ENCODE measurements at regions of chr22 and their contacts with region 1.

Region 1: GRCh38 chr22:31084811-31085497 is 3.8 kb downstream of the SMTN start:
- DNase-seq: peak; percentile 87 to 90 (median 89)
- ATAC-seq: peak; percentile 69 to 82 (median 76)
- H3K4me3 ChIP-seq: peak overlapping the region; percentile 78 to 89 (median 85)
- H3K27ac ChIP-seq: peak overlapping the region; percentile 83 to 93 (median 85)
- H3K4me1 ChIP-seq: peaks cover 0 to 6% (median 0%) of the 10 kb centered on the region in 4 donors
- H3K27me3 ChIP-seq: no peaks in the 10 kb centered on the region
- CTCF ChIP-seq: peak; percentile 79 to 94 (median 92)
- POLR2A ChIP-seq: peak; percentile 81

Region 2: DNA sequence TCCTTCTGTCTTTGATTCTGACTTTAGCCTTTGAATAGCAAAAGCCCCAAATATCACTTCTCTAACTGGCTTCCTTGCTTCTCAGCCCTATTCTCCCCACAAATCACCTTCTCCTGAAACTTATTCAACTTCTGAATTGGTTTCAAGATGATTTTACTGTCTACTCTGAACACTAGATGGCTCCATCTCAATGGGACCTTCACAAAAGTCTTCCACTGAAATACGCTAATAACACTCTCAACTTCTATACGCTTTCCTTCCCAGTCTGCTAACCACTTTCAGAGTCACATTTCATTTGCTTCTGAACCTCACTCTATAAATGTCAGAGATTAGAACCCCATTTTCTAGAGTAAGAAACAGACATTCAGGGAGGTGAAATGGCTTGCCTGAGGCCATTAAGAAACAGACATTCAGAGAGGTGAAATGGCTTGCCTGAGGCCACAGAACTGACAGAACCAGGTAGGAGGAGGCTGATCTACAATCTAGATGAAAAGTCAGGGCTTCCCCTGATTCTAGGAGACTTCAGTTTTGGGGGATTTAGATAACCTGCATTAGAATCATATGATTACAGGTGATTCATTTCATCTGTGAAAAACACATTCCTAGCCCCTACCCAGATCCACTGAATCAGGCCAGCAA is 137.0 kb before region 1 on chr22:
- intact Hi-C with region 1: loop called (anchors 5 kb)
- DNase-seq: no peak
- ATAC-seq: peak; percentile 65 to 82 (median 70)
- H3K4me3 ChIP-seq: no peak overlapping the region
- H3K27ac ChIP-seq: no peak overlapping the region
- H3K4me1 ChIP-seq: no peaks in the 10 kb centered on the region
- H3K27me3 ChIP-seq: no peaks in the 10 kb centered on the region
- CTCF ChIP-seq: peak; percentile 50 to 61 (median 54)
- POLR2A ChIP-seq: no peak

Region 3: DNA sequence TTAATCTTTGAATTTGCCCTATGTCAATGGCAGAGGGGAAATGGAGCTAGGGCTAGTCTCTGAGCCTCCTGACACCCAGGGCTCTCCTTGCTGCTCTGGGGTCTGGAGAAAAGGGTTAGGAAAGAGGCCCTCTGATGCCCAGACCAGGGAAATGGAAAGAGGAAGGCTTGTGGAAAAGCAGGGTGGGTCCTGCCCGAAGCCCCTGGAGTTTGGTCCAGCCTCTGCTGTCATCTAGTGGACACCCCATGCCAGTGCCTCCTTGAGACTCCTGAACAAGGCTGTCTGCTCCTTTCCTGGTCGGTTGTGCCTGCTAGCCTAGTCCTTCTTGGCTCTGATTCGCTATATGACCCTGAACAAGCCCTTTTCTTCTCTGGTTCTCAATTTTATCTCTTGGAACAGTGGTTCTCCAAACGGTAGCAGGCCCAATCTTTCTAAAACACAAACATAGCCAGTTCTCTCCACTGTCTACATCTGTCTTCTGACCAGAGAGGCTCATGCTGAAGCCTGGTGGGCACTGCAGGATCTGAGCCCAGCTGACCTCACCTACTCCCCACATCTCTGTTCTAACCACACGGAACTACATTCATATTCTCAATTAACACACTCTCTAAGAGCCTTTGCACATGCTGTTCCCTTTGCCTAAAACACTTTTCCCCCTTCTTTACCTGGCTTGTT is 64.1 kb after region 1 on chr22:
- intact Hi-C with region 1: loop called in 1 of 2 experiments (anchors 10 kb)
- DNase-seq: peak in 1 of 3 donors; percentile 55
- ATAC-seq: peak; percentile 85 to 89 (median 88)
- H3K4me3 ChIP-seq: no peak overlapping the region
- H3K27ac ChIP-seq: no peak overlapping the region
- H3K4me1 ChIP-seq: no peaks in the 10 kb centered on the region
- H3K27me3 ChIP-seq: no peaks in the 10 kb centered on the region
- CTCF ChIP-seq: peak; percentile 63 to 82 (median 76)
- POLR2A ChIP-seq: no peak

Region 4: GRCh38 chr22:31230871-31231621 is 146.1 kb after region 1 on chr22:
- intact Hi-C with region 1: loop called in 1 of 2 experiments (anchors 10 kb)
- DNase-seq: peak in 2 of 3 donors; percentile 38 to 67
- ATAC-seq: peak; percentile 69 to 91 (median 83)
- H3K4me3 ChIP-seq: no peak overlapping the region
- H3K27ac ChIP-seq: peak overlapping the region; percentile 71 to 85 (median 78)
- H3K4me1 ChIP-seq: peaks cover 0 to 41% (median 19%) of the 10 kb centered on the region in 4 donors
- H3K27me3 ChIP-seq: no peaks in the 10 kb centered on the region
- CTCF ChIP-seq: peak; percentile 83 to 90 (median 86)
- POLR2A ChIP-seq: no peak